ENCODE measurements at regions of chr14 and their contacts with region 1.

Region 1: DNA sequence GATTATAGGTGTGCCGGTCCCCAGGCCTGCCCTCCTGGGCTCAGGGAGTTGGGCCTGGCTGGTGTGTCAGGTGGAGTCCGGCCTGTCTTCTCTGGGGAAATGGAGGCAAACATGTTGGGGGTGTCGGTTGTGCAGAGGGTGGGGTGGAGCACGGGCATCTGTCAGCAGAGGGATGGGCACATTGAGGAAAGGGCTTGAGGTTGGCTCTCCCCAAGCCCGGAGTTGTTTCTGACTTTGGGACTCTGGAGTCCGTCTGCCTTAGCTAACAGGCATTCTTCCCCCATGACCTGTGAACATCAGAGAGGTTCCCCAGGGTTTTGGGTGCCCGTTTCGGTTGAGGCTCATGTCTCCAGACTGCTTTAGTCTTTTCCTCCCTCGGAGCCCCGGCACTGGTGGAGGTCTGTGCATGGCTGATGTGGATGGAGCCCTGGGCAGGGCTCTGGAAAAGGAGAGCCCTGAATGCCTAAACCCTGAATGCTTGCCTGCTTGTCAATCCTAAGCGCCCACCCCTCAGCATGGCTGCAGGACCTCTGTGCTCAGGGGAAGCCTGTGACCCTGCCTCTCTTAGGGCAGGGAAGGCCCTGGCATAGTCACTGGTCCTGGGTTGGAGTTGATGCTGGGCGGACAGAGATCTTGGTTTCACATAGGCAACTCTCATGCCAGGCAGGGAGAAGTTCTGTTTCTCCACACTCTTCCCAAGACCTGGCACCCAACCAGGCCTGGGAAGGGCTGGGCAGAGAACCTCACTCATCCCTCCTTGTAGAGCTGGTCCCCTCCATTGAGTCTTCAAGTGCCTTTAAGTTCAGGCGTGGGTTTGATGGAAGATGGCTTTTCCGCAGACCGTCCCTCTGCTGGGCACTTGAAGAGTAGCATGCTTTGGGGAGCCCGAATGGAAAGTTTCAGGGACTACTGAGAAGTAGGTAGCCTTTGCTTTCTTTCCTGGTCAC is 12.9 kb downstream of the NYNRIN start:
- DNase-seq: peak in 1 of 2 experiments; percentile 60
- H3K4me3 ChIP-seq: no peak overlapping the region
- H3K4me3 Mint-ChIP-seq: no peak overlapping the region
- H3K27ac Mint-ChIP-seq: no peak overlapping the region
- H3K4me1 ChIP-seq: no peaks in the 10 kb centered on the region
- H3K4me1 Mint-ChIP-seq: no peaks in the 10 kb centered on the region
- H3K27me3 ChIP-seq: no peaks in the 10 kb centered on the region
- H3K27me3 Mint-ChIP-seq: no peaks in the 10 kb centered on the region
- CTCF ChIP-seq: peak; percentile 71 to 75

Region 2: GRCh38 chr14:24135834-24136542 is 275.7 kb before region 1 on chr14 and contains the start of gene PSME1:
- CTCF ChIA-PET with region 1: interaction called, 11 read pairs
- POLR2A ChIA-PET with region 1: no interaction called
- intact Hi-C with region 1: no loop called
- DNase-seq: peak; percentile 94 to 95
- H3K4me3 ChIP-seq: peak within 1 kb of the TSS; percentile 90
- H3K4me3 Mint-ChIP-seq: peak within 1 kb of the TSS; percentile 77
- H3K27ac Mint-ChIP-seq: peak within 1 kb of the TSS; percentile 57
- H3K4me1 ChIP-seq: no peaks in the 10 kb centered on the region; the same call in 1 of the 2 replicates
- H3K4me1 Mint-ChIP-seq: peaks cover 32% of the 10 kb centered on the region
- H3K27me3 ChIP-seq: no peaks in the 10 kb centered on the region
- H3K27me3 Mint-ChIP-seq: no peaks in the 10 kb centered on the region
- CTCF ChIP-seq: no peak
- total RNA-seq, gene PSME1: 130 and 141 TPM in 2 replicates

Measured in Caco-2 (cell line).